Activated CD4-positive, alpha-beta memory T cell treated with anti-CD3 and anti-CD28 coated beads, Interleukin-2, amount 10 ng/mL, durations not matched to agents 7 days and 5 days (primary cell): ENCODE measurements at regions of chr10 and their contacts with region 1.

Region 1: DNA sequence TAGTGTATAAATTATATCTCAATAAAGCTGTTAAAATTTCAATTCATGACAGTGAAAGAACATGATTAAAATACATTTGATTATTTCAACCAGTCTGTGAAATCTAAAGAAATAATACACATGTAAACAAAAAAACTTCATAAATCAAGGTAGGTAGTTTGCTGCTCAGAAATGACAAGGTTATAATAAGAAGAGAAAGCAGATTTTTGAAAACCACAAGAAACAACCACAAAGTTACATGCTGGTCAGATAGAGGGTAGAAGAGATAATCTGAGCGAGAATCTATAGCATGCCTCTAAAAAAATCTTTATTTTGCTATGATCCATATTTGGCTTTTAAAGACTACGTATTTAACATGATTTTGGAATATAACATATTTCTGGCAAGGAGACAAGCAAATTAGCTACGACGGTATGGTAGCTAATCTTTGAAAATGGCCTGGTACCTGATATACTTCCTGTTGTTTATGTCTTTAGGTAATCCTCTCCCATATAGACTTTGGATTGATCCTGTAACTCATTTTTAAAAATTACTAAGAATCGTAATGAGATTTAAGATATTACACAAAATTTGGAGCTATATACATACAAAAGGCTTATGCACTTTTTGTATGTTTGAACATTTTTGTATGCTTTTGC is 23.5 kb upstream of the VCL start:
- DNase-seq: no peak
- H3K4me3 Mint-ChIP-seq: peak overlapping the region; percentile 30
- H3K27ac Mint-ChIP-seq: peak overlapping the region; percentile 54
- H3K4me1 Mint-ChIP-seq: peaks cover 25% of the 10 kb centered on the region
- H3K27me3 Mint-ChIP-seq: peaks cover 7% of the 10 kb centered on the region

Region 2: GRCh38 chr10:73991884-73992245 is 17.4 kb after region 1 on chr10:
- CTCF ChIA-PET with region 1: interaction called, 5 read pairs
- POLR2A ChIA-PET with region 1: interaction called, 15 read pairs
- DNase-seq: peak; percentile 93
- H3K4me3 Mint-ChIP-seq: peak overlapping the region; percentile 24
- H3K27ac Mint-ChIP-seq: peak overlapping the region; percentile 84
- H3K4me1 Mint-ChIP-seq: peaks cover 57% of the 10 kb centered on the region
- H3K27me3 Mint-ChIP-seq: no peaks in the 10 kb centered on the region